WTC11 (cell line): ENCODE measurements at regions of chr16 and their contacts with region 1.

Region 1: DNA sequence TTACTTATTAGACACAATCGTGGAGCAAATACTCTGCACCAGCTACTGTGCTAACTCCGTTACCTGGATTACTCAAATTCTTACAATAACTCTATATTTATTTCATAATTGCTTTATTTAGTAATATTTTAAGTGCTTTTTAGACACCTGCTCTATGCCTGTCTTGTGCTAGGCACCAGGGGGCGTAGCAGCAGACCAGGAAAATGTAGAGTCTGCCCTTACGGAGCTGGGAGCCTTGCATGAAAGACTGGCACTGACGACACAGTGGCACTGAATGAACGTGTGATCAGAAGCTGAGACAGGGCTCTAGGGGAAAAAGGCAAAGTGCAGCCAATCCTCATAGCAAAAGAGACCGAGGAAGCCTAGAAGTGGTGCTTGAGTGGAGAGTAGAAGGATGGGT is 486.5 kb downstream of the CDH13 start:
- DNase-seq: peak; percentile 63
- ATAC-seq: peak; percentile 88
- H3K4me3 Mint-ChIP-seq: peak overlapping the region; percentile 50; the same call in 1 of the 2 replicates
- H3K27ac Mint-ChIP-seq: no peak overlapping the region
- H3K4me1 Mint-ChIP-seq: peaks cover 28% of the 10 kb centered on the region
- H3K27me3 Mint-ChIP-seq: no peaks in the 10 kb centered on the region; the same call in 1 of the 2 replicates
- CTCF ChIP-seq: peak; percentile 54

Region 2: DNA sequence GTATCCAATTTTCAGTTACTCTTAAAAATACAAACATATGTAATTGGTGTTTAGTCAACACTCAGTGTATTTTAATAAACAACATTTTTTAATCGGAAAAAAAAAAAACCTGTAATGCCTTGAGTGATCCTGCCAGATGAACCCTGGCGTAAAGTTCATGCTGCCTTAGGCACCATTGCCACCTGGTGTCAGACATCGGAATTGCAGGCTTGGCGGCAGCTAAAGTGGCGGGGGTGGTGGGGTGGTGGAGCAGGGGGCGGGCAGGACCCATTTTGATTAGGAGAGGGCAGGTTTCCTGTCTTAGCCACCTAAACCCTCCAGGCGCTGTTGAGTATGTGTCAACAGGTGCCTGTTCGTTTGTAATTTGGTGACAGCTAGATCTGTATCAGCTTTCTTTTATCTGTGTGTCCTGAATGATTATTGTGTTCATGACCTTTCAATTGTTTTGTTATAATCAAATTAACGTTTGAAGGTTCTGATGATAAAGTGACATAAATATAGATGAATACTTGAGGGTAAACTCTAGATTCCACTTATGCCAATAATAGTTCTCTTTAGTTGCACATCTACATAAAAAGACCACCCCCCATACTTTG is 102.2 kb after region 1 on chr16:
- CTCF ChIA-PET with region 1: interaction called, 60 read pairs
- POLR2A ChIA-PET with region 1: no interaction called
- DNase-seq: peak; percentile 93
- ATAC-seq: peak; percentile 92
- H3K4me3 Mint-ChIP-seq: no peak overlapping the region
- H3K27ac Mint-ChIP-seq: no peak overlapping the region
- H3K4me1 Mint-ChIP-seq: peaks cover 8% of the 10 kb centered on the region
- H3K27me3 Mint-ChIP-seq: no peaks in the 10 kb centered on the region; the same call in 1 of the 2 replicates
- CTCF ChIP-seq: peak; percentile 94

Region 3: DNA sequence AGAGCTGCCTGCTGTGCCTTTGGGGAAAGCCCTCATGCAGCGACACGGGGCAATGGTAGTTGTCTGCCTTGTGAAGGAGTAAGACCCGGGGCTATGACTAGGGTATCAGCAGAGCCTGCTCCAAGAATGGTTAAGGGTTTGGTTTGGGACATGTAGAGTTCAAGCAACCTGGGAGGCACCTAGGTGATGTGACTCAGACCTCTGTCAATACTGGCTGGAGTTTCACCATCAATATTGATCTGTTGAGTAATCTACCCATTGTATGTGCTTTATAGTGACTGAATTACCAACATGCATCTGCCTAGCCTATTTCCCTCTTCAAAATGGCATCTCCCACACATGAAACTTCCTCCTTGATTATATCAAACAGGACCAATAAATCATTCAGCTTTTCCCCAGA is 296.0 kb after region 1 on chr16:
- CTCF ChIA-PET with region 1: no interaction called
- POLR2A ChIA-PET with region 1: no interaction called
- DNase-seq: no peak
- ATAC-seq: no peak
- H3K4me3 Mint-ChIP-seq: no peak overlapping the region
- H3K27ac Mint-ChIP-seq: no peak overlapping the region
- H3K4me1 Mint-ChIP-seq: no peaks in the 10 kb centered on the region
- H3K27me3 Mint-ChIP-seq: no peaks in the 10 kb centered on the region; the same call in 1 of the 2 replicates
- CTCF ChIP-seq: no peak